ENCODE measurements at regions of chr5 and their contacts with region 1.

Region 1: GRCh38 chr5:54273715-54274114 is 36.7 kb downstream of the ARL15 start:
- DNase-seq: peak in 2 of 4 experiments; percentile 47 to 66
- ATAC-seq: peak; percentile 90
- H3K4me3 ChIP-seq: no peak overlapping the region
- H3K27ac ChIP-seq: peak overlapping the region; percentile 80
- H3K4me1 ChIP-seq: peaks cover 6 to 29% of the 10 kb centered on the region in 2 experiments
- H3K27me3 ChIP-seq: no peaks in the 10 kb centered on the region
- CTCF ChIP-seq: no peak
- EP300 ChIP-seq: peak; percentile 61; the same call in 1 of the 2 replicates
- POLR2A ChIP-seq: no peak
- RAD21 ChIP-seq: no peak

Region 2: GRCh38 chr5:53590759-53591158 is 683.0 kb before region 1 on chr5:
- CTCF ChIA-PET with region 1: no interaction called
- POLR2A ChIA-PET with region 1: no interaction called
- in situ Hi-C with region 1: no loop called
- intact Hi-C with region 1: no loop called
- DNase-seq: no peak
- ATAC-seq: no peak
- H3K4me3 ChIP-seq: no peak overlapping the region
- H3K27ac ChIP-seq: no peak overlapping the region
- H3K4me1 ChIP-seq: no peaks in the 10 kb centered on the region; a peak in 1 of 5 replicates
- H3K27me3 ChIP-seq: no peaks in the 10 kb centered on the region
- CTCF ChIP-seq: no peak
- EP300 ChIP-seq: no peak
- POLR2A ChIP-seq: no peak
- RAD21 ChIP-seq: no peak

Region 3: GRCh38 chr5:54159153-54159892 is 114.4 kb before region 1 on chr5:
- CTCF ChIA-PET with region 1: no interaction called
- POLR2A ChIA-PET with region 1: no interaction called
- in situ Hi-C with region 1: loop called (anchors 5 kb)
- intact Hi-C with region 1: no loop called
- DNase-seq: peak; percentile 17 to 61 (median 36)
- ATAC-seq: peak; percentile 86
- H3K4me3 ChIP-seq: no peak overlapping the region
- H3K27ac ChIP-seq: peak overlapping the region; percentile 4; the same call in 1 of the 3 replicates
- H3K4me1 ChIP-seq: peaks cover 0 to 12% of the 10 kb centered on the region in 2 experiments; a peak in 2 of 5 replicates
- H3K27me3 ChIP-seq: no peaks in the 10 kb centered on the region
- CTCF ChIP-seq: peak in 2 of 3 experiments; percentile 17 to 41; a peak in 2 of 6 replicates
- EP300 ChIP-seq: no peak
- POLR2A ChIP-seq: no peak
- RAD21 ChIP-seq: peak; percentile 13 to 53; a peak in 2 of 4 replicates